CD4-positive, alpha-beta memory T cell (primary cell): ENCODE measurements at regions of chr6 and their contacts with region 1.

Region 1: GRCh38 chr6:26290941-26291340 is 74.1 kb upstream of the BTN3A2 start:
- DNase-seq: no peak
- H3K4me3 ChIP-seq: no peak overlapping the region
- H3K4me3 Mint-ChIP-seq: no peak overlapping the region
- H3K27ac ChIP-seq: no peak overlapping the region
- H3K27ac Mint-ChIP-seq: peak overlapping the region in 1 of 7 donors; percentile 6
- H3K4me1 ChIP-seq: peaks cover 4% of the 10 kb centered on the region
- H3K4me1 Mint-ChIP-seq: peaks cover 5 to 15% (median 10%) of the 10 kb centered on the region in 4 donors
- H3K27me3 ChIP-seq: no peaks in the 10 kb centered on the region
- H3K27me3 Mint-ChIP-seq: peaks cover 5% of the 10 kb centered on the region in 2 donors

Region 2: DNA sequence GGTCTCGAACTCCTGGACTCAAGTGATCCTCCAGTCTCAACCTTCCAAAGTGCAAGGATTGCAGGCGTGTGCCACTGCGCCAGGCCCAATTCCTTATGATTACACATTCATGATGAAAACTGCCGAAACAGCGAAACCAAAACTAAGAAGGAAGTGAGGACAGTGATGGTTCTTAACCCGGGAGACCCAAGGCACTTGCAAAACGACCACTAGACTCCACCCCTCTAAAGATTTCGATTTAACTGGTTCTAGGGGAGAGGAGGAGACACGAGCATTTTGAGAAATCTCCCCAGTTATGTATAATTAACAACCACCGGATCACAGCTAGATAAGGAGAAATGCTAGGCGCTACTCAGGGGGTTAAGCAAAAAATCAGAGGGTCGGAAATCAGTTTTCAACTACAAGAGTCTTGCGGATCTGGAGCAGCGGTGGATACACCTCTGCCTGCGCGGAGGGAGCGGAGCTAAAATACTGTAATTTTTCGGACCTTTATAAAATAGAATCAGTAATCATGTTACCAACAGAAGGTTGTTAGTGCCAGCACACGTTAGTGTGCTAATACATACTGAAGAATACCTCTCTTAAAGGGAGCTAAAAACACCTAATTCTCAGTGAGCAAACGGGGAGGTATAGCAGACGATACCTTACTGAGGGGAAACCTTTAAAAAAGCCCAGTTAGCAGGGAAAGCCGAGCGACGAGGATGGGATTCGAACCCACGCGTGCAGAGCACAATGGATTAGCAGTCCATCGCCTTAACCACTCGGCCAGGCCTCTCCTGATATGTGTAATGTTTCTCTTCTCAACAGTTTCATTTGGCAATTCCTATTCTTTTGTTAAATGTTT is 14.1 kb after region 1 on chr6:
- CTCF ChIA-PET with region 1: interaction called, 5 read pairs
- POLR2A ChIA-PET with region 1: interaction called, 23 read pairs
- intact Hi-C with region 1: loop called (anchors 1 kb)
- DNase-seq: peak; percentile 48 to 80 (median 74)
- H3K4me3 ChIP-seq: peak overlapping the region; percentile 33 to 59
- H3K4me3 Mint-ChIP-seq: peak overlapping the region; percentile 86 to 97 (median 93)
- H3K27ac ChIP-seq: peak overlapping the region; percentile 51
- H3K27ac Mint-ChIP-seq: peak overlapping the region in 6 of 7 donors; percentile 92 to 96 (median 94)
- H3K4me1 ChIP-seq: peaks cover 19% of the 10 kb centered on the region
- H3K4me1 Mint-ChIP-seq: peaks cover 19 to 41% (median 31%) of the 10 kb centered on the region in 4 donors
- H3K27me3 ChIP-seq: no peaks in the 10 kb centered on the region
- H3K27me3 Mint-ChIP-seq: peaks cover 0 to 2% of the 10 kb centered on the region in 2 donors

Region 3: GRCh38 chr6:26351544-26351953 is 60.6 kb after region 1 on chr6:
- CTCF ChIA-PET with region 1: no interaction called
- POLR2A ChIA-PET with region 1: no interaction called
- intact Hi-C with region 1: no loop called
- DNase-seq: no peak
- H3K4me3 ChIP-seq: no peak overlapping the region
- H3K4me3 Mint-ChIP-seq: no peak overlapping the region
- H3K27ac ChIP-seq: no peak overlapping the region
- H3K27ac Mint-ChIP-seq: no peak overlapping the region
- H3K4me1 ChIP-seq: no peaks in the 10 kb centered on the region
- H3K4me1 Mint-ChIP-seq: peaks cover 0 to 7% (median 0%) of the 10 kb centered on the region in 4 donors
- H3K27me3 ChIP-seq: no peaks in the 10 kb centered on the region
- H3K27me3 Mint-ChIP-seq: no peaks in the 10 kb centered on the region

Region 4: GRCh38 chr6:26363882-26364701 is 73.2 kb after region 1 on chr6:
- CTCF ChIA-PET with region 1: no interaction called
- POLR2A ChIA-PET with region 1: no interaction called
- intact Hi-C with region 1: no loop called
- DNase-seq: peak in 3 of 5 donors; percentile 40 to 44 (median 43)
- H3K4me3 ChIP-seq: peak overlapping the region; percentile 79 to 87
- H3K4me3 Mint-ChIP-seq: peak overlapping the region in 1 of 8 donors; percentile 21
- H3K27ac ChIP-seq: peak overlapping the region; percentile 96
- H3K27ac Mint-ChIP-seq: no peak overlapping the region
- H3K4me1 ChIP-seq: peaks cover 69% of the 10 kb centered on the region
- H3K4me1 Mint-ChIP-seq: peaks cover 45 to 56% (median 52%) of the 10 kb centered on the region in 4 donors
- H3K27me3 ChIP-seq: no peaks in the 10 kb centered on the region
- H3K27me3 Mint-ChIP-seq: no peaks in the 10 kb centered on the region

Region 5: GRCh38 chr6:26514984-26515383 is 224.0 kb after region 1 on chr6:
- CTCF ChIA-PET with region 1: no interaction called
- POLR2A ChIA-PET with region 1: no interaction called
- intact Hi-C with region 1: no loop called
- DNase-seq: no peak
- H3K4me3 ChIP-seq: no peak overlapping the region
- H3K4me3 Mint-ChIP-seq: no peak overlapping the region
- H3K27ac ChIP-seq: no peak overlapping the region
- H3K27ac Mint-ChIP-seq: no peak overlapping the region
- H3K4me1 ChIP-seq: peaks cover 3% of the 10 kb centered on the region
- H3K4me1 Mint-ChIP-seq: peaks cover 0 to 3% (median under 1%) of the 10 kb centered on the region in 4 donors
- H3K27me3 ChIP-seq: no peaks in the 10 kb centered on the region
- H3K27me3 Mint-ChIP-seq: no peaks in the 10 kb centered on the region